ENCODE measurements at regions of chr3 and their contacts with region 1.

Region 1: GRCh38 chr3:177157492-177157891 is 39.8 kb downstream of the TBL1XR1 start:
- DNase-seq: no peak
- ATAC-seq: no peak
- H3K4me3 ChIP-seq: no peak overlapping the region
- H3K4me3 Mint-ChIP-seq: no peak overlapping the region
- H3K27ac ChIP-seq: no peak overlapping the region
- H3K27ac Mint-ChIP-seq: peak overlapping the region; percentile 14
- H3K4me1 ChIP-seq: peaks cover 14% of the 10 kb centered on the region
- H3K4me1 Mint-ChIP-seq: peaks cover 73% of the 10 kb centered on the region
- H3K27me3 ChIP-seq: no peaks in the 10 kb centered on the region
- H3K27me3 Mint-ChIP-seq: no peaks in the 10 kb centered on the region
- CTCF ChIP-seq: no peak

Region 2: DNA sequence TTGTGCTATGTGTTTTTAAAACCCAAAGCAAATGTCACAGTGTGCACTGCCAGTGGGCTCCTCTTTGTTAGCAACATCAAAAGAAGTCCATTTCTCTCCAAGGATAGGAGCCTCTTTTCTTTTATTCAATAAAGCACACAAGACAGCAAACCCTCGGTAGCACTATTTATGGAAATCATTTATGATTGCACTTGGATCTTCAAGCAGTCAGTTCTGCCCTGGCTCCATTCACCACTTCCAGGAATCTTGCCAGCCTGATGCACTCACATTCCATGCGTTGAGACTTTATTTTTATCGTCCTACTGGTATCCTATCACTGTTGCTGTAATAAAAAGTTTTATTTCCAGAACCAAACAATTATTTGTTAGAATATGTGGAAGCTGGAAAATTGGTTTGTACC is 372.3 kb before region 1 on chr3:
- CTCF ChIA-PET with region 1: no interaction called
- POLR2A ChIA-PET with region 1: no interaction called
- intact Hi-C with region 1: no loop called
- DNase-seq: no peak
- ATAC-seq: no peak
- H3K4me3 ChIP-seq: no peak overlapping the region
- H3K4me3 Mint-ChIP-seq: no peak overlapping the region
- H3K27ac ChIP-seq: no peak overlapping the region
- H3K27ac Mint-ChIP-seq: no peak overlapping the region
- H3K4me1 ChIP-seq: no peaks in the 10 kb centered on the region
- H3K4me1 Mint-ChIP-seq: no peaks in the 10 kb centered on the region
- H3K27me3 ChIP-seq: no peaks in the 10 kb centered on the region
- H3K27me3 Mint-ChIP-seq: no peaks in the 10 kb centered on the region
- CTCF ChIP-seq: no peak

Region 3: DNA sequence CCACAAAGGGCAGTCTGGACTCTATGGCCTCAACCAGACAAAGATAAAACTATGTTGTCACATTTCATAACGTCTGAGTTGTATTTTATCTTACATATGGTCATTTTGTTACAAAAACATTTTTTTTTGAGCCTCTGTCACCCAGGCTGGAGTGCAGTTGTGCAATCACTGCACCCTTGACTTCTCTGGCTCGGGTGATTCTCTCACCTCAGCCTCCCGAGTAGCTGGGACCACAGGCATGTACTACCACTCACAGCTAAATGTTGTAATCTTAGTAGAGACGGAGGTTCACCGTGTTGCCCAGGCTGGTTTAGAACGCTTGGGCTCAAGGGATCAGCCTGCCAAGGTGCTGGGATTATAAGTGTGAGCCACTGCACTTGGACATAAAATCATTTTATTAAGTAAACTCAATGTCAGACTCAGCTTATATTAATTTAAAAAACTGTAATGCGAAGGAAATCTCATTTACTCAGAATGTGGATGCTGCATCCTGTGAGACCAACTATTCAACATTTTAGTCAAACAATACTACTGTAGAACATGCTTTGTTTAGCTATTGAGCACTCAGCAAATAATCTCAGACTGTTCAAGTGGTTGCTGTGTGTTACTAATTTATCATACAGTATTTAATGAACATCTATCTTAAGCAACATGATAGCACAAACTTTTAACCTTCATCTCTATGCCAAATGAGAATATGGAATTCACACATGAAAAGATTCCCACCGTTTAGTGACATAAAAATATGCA is 169.4 kb before region 1 on chr3:
- CTCF ChIA-PET with region 1: no interaction called
- POLR2A ChIA-PET with region 1: no interaction called
- intact Hi-C with region 1: no loop called
- DNase-seq: no peak
- ATAC-seq: no peak
- H3K4me3 ChIP-seq: no peak overlapping the region
- H3K4me3 Mint-ChIP-seq: no peak overlapping the region
- H3K27ac ChIP-seq: no peak overlapping the region
- H3K27ac Mint-ChIP-seq: no peak overlapping the region
- H3K4me1 ChIP-seq: no peaks in the 10 kb centered on the region
- H3K4me1 Mint-ChIP-seq: no peaks in the 10 kb centered on the region
- H3K27me3 ChIP-seq: no peaks in the 10 kb centered on the region
- H3K27me3 Mint-ChIP-seq: no peaks in the 10 kb centered on the region
- CTCF ChIP-seq: no peak

Region 4: DNA sequence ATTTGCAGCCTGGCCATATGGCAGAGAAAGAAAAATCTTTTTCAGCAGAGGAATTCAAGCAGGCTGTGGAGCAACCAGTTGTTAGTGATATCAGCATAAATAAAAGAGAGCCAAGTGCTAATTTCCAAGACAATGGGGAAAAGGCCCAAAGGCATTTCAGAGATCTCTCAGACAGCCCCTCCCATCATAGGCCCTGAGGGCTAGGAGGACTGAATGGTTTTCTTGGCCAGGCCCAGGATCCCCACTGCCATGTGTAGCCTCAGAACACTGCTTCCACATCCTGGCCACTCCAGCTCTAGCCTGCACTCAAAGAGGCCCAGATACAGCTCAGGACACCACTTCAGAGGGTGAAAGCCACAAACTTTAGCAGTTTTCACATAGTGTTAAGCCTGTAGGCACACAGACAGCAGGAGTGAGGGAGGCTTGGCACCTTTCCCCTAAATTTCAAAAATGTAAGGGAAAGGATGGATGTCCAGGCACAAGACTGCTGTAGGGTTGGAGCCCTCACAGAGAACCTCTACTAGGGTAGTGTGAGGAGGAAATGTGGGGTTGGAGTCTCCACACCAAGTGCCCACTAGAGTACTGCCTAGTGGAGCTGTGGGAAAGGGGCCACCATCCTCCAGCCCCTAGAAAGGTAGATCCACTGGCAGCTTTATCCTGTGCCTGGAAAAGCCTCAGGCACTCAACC is 151.6 kb before region 1 on chr3:
- CTCF ChIA-PET with region 1: no interaction called
- POLR2A ChIA-PET with region 1: no interaction called
- intact Hi-C with region 1: no loop called
- DNase-seq: no peak
- ATAC-seq: no peak
- H3K4me3 ChIP-seq: no peak overlapping the region
- H3K4me3 Mint-ChIP-seq: no peak overlapping the region
- H3K27ac ChIP-seq: no peak overlapping the region
- H3K27ac Mint-ChIP-seq: no peak overlapping the region
- H3K4me1 ChIP-seq: no peaks in the 10 kb centered on the region
- H3K4me1 Mint-ChIP-seq: no peaks in the 10 kb centered on the region
- H3K27me3 ChIP-seq: no peaks in the 10 kb centered on the region
- H3K27me3 Mint-ChIP-seq: no peaks in the 10 kb centered on the region
- CTCF ChIP-seq: no peak

Region 5: DNA sequence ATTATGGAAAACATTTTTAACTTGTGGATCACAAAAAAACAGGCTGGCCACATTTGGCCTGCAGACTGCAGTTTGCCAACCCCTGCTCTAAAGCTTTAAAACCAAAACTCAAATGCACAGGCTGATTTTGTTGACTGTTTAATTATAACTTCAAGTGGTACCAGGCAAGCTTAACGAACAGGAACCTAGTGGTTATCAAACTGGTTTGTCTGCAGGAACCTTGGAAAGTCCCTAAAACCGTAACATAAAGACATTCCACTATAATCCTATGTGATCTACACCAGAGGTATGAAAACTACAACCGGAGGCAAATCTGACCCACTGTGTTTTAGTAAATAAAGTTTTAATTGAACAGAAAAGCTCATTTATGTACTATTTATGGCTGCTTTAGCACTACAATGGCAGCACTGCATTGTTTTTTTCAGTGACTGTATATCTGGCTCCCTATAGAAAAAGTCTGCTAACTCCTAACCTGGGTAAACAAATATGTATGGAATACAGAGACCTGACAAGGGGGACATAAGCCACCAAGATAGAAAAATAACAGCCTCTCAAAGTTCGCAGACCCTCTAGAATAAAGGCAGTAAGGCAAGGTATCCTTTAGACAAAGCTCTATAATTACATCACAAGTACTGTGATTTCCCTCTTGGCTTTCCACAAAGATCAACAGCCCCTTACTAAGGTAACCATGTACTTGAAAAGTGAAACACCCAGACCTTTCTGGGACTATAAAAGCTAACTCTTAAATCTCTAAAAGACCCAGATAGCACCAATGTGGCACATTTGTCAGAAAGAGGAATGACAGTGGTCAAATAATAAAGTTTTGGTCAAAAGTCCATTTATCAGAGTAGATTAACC is 12.3 kb before region 1 on chr3:
- CTCF ChIA-PET with region 1: interaction called, 5 read pairs
- POLR2A ChIA-PET with region 1: interaction called, 7 read pairs
- intact Hi-C with region 1: loop called in 1 of 2 experiments (anchors 1 kb)
- DNase-seq: peak in 3 of 14 experiments; percentile 70 to 81 (median 79)
- ATAC-seq: peak; percentile 81
- H3K4me3 ChIP-seq: peak overlapping the region; percentile 8
- H3K4me3 Mint-ChIP-seq: peak overlapping the region; percentile 65
- H3K27ac ChIP-seq: peak overlapping the region; percentile 39 to 53
- H3K27ac Mint-ChIP-seq: peak overlapping the region; percentile 90
- H3K4me1 ChIP-seq: peaks cover 46% of the 10 kb centered on the region
- H3K4me1 Mint-ChIP-seq: peaks cover 83% of the 10 kb centered on the region
- H3K27me3 ChIP-seq: no peaks in the 10 kb centered on the region
- H3K27me3 Mint-ChIP-seq: no peaks in the 10 kb centered on the region
- CTCF ChIP-seq: no peak

Measured in CD4-positive, alpha-beta T cell (primary cell).